ENCODE measurements at regions of chr12 and their contacts with region 1.

Region 1: GRCh38 chr12:122860346-122861090 is 25.3 kb downstream of the HIP1R start:
- DNase-seq: peak; percentile 47
- ATAC-seq: peak; percentile 76
- H3K4me3 ChIP-seq: no peak overlapping the region
- H3K27ac ChIP-seq: peak overlapping the region; percentile 86
- H3K4me1 ChIP-seq: peaks cover 44% of the 10 kb centered on the region
- H3K27me3 ChIP-seq: no peaks in the 10 kb centered on the region
- CTCF ChIP-seq: peak; percentile 94

Region 2: DNA sequence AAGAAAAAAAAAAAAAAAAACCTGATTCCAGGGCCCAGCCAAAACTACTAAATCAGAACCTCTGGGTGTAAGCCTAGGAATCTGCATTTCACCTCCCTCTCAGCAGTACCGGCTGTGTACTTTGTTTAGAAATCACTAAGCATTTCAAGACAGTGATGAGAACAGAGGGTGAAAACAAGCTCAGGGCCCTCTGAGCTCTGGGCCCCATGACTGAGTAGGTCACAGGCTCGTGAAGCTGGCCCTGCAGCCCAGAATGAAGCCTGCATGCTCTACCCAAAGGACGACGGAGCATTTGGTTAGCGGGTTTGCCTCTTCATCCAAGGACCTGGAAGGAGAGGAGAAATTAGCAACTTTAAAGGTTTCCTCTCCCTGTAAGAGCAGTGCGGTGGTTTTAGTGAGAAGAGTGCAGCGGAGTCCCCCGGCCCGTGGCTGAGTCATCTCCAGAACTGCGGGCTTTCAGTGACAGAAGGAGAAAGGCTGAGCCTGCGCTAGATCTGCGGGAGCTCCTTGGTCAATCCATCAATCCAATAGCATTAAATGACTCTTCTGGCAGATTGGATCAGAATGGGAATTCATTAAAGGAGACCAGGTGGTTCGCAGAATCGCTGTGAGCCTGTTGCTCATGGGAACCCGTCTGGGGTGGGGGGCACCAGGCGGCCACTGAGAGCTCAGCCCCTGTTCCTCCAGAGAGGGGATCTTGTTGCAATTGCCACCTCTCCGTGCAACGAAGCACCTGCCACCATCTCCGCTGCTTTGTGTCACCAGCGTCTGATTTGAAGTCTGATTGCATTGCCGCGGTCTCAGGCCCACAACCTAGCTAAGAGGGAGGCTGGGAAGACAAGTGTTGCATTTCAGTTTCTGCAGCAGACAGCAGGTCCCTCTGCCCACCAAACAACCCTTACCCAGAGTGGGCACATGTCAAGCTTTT is 693.8 kb before region 1 on chr12:
- CTCF ChIA-PET with region 1: no interaction called
- POLR2A ChIA-PET with region 1: no interaction called
- in situ Hi-C with region 1: no loop called
- intact Hi-C with region 1: no loop called
- DNase-seq: no peak
- ATAC-seq: no peak
- H3K4me3 ChIP-seq: no peak overlapping the region
- H3K27ac ChIP-seq: no peak overlapping the region
- H3K4me1 ChIP-seq: no peaks in the 10 kb centered on the region
- H3K27me3 ChIP-seq: no peaks in the 10 kb centered on the region
- CTCF ChIP-seq: no peak

Region 3: DNA sequence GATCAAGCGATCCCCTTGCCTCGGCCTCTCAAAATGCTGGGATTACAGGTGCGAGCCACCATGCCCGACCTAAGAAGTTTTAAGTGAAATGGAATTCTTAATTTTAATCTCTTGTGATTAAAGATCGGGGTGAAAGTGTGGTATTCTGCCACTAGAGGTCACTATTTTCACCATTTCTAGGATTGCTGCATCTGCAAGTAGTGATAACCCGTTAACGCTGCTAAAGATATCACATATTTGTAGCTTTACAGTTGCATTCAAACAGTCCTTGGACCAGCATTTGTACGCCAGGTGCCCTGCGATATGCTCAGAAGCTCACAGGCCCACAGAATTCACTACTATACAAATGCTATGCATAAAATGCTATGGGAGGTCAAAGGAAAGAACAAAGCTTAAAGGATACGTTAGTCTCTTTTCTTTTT is 66.8 kb before region 1 on chr12:
- CTCF ChIA-PET with region 1: interaction called, 21 read pairs
- POLR2A ChIA-PET with region 1: no interaction called
- in situ Hi-C with region 1: no loop called
- intact Hi-C with region 1: no loop called
- DNase-seq: peak; percentile 41
- ATAC-seq: peak; percentile 81
- H3K4me3 ChIP-seq: no peak overlapping the region
- H3K27ac ChIP-seq: no peak overlapping the region
- H3K4me1 ChIP-seq: no peaks in the 10 kb centered on the region
- H3K27me3 ChIP-seq: no peaks in the 10 kb centered on the region
- CTCF ChIP-seq: peak; percentile 84

Region 4: DNA sequence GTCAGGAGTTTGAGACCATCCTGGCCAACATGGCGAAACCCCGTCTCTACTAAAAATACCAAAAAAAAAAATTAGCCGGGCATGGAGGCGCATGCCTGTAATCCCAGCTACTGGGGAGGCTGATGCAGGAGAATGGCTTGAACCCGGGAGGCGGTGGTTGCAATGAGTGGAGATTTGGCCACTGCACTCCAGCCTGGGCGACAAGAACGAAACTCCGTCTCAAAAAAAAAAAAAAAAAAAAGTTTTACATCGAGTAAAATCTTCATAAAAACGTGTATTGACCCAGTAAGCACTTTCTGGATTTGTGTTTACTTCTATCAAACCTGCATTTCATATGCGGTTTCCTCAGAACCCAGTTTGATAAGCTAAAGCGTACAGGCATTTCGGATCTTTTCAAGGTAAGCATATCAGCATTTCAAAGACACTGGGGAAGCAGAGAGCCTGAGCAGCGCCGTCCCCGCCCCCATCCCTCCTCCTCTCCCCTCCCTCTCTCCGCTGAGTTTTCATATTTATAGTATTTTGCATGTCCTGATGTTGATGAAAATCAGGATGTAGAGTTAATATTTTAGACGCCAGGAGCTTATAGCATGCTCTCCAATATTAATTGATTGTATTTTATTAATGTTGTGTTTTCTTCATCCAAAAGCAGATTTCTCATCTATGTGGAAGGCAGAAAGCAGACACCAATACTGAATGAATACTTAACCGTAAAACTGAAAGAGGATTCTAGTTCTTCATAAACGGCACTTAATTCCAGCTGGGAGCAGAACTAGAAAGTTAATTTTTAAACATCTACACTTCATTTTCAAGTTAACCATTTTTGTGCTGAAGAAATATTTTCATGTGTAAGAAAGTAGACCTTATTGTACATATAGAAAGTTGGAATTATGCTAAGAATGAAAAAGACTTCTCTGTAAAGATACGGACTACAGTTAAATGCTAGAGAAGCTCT is 34.5 kb before region 1 on chr12:
- CTCF ChIA-PET with region 1: no interaction called
- POLR2A ChIA-PET with region 1: interaction called, 17 read pairs
- in situ Hi-C with region 1: no loop called
- intact Hi-C with region 1: no loop called
- DNase-seq: no peak
- ATAC-seq: peak; percentile 64
- H3K4me3 ChIP-seq: peak overlapping the region; percentile 25 to 38
- H3K27ac ChIP-seq: no peak overlapping the region
- H3K4me1 ChIP-seq: peaks cover 3% of the 10 kb centered on the region; the same call in 1 of the 2 replicates
- H3K27me3 ChIP-seq: no peaks in the 10 kb centered on the region
- CTCF ChIP-seq: no peak

Region 5: DNA sequence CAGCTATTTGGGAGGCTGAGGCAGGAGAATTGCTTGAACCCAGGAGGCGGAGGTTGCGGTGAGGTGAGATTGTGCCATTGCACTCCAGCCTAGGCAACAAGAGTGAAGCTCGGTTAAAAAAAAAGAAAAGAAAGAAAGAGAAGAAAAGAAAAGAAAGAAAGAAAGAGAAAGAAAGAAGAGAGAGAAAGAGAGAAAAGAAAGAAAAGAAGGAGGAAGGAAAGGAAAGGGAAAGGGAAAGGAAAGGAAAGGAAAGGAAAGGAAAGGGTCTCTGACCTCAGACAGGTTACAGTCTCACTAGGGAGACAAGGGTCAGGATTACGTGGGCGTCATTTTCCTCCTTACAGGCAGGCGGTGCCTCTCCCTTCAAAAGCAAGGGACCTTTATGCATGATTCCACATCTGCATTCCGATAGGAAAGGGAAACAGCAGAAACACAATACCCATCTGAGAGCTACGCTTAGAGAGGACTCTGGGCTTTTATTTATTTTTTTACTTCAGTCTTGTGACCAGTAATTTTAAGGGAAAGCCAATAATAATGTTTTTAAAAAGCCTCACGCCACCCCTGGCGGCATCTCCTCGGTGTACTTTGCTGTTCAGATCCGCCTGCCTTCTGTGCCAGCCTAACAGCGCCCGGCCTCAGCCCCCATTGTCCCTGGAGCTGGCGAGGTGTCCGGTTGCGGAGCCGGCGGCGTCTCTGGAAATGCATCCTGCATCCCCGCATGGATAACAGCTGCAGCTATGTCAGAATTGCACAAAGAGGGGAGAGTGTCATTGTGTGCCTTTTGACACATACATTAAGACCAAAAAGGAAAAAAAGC is 26.2 kb before region 1 on chr12:
- CTCF ChIA-PET with region 1: interaction called, 15 read pairs
- POLR2A ChIA-PET with region 1: no interaction called
- in situ Hi-C with region 1: no loop called
- intact Hi-C with region 1: no loop called
- DNase-seq: no peak
- ATAC-seq: peak; percentile 70
- H3K4me3 ChIP-seq: peak overlapping the region; percentile 50 to 70
- H3K27ac ChIP-seq: peak overlapping the region; percentile 40
- H3K4me1 ChIP-seq: peaks cover 12% of the 10 kb centered on the region
- H3K27me3 ChIP-seq: no peaks in the 10 kb centered on the region
- CTCF ChIP-seq: no peak; the same call in 1 of the 2 replicates

Region 6: DNA sequence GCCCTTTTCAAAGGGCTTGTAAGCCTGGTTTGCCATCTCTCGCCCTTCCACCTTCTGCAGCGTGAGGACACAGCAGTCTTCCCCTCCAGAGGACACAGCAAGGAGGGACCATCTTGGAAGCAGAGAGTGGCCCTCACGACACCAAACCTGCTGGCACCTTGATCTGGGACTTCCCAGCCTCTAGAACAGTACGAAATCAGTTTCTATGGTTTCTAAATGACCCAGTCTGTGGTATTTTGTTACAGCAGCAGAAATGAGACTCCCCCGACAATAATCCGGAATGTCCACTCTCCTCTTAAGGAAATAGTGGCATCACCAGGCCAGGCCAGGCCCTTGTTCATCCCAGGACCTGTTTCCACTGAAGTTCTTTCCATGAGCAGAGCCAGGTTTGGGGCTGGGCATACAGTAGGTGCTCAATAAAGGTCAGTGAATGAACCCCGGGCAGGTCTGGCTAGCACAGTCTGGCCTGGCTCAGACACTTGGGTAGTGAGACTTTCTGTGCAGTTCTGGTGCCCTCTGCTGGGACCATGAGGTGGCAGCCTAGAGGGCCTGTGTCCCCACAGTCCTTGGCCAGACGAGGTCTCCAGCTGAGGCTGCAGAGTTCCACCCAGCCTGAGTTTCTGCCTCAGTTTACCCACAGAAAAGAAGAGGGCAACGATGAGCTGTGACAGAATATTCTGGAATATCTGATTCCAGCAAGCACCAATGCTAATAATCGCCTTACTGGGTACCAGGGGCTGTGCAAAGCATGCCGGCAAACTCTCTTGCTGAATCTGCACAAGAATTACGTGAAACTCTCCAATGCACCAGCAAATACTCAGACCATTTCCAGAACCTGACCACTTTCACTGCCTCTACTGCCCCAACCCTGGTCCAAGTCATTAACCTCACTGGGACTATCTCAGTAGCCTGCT is 91.7 kb after region 1 on chr12:
- CTCF ChIA-PET with region 1: interaction called, 11 read pairs
- POLR2A ChIA-PET with region 1: interaction called, 7 read pairs
- in situ Hi-C with region 1: no loop called
- intact Hi-C with region 1: no loop called
- DNase-seq: no peak
- ATAC-seq: peak; percentile 97
- H3K4me3 ChIP-seq: no peak overlapping the region
- H3K27ac ChIP-seq: peak overlapping the region; percentile 82
- H3K4me1 ChIP-seq: peaks cover 27% of the 10 kb centered on the region
- H3K27me3 ChIP-seq: no peaks in the 10 kb centered on the region
- CTCF ChIP-seq: peak; percentile 95

Region 7: DNA sequence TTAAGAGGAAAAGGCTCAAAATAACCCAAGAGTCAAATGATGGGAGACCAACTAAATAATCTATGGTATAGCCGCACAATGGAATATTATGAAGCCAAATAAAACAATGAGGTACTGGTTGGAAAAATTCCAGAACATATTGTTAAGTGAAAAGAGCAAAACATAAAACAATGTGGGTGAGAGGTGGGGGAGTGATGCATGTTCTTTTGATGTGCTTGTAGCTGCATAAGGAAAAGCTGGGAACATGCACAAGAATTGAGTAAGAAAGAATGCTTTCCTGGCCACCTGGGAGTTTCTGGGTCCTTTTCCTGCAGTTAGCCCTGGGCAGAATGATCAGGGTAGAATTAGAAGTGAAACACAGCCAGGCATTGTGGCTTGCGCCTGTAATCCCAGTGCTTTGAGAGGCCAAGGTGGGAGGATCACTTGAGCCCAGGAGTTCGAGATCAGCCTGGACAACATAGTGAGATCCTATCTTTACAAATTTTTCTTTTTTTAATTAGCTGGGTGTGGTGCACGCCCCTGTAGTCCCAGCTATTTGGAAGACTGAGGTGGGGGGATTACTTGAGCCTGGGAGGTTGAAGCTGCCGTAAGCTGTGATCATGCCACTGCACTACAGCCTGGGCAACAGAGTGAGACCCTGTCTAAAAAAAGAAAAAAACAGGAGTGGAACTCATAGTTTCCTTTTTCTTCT is 97.8 kb after region 1 on chr12:
- CTCF ChIA-PET with region 1: interaction called, 11 read pairs
- POLR2A ChIA-PET with region 1: interaction called, 7 read pairs
- in situ Hi-C with region 1: no loop called
- intact Hi-C with region 1: loop called (anchors 2 kb)
- DNase-seq: no peak
- ATAC-seq: no peak
- H3K4me3 ChIP-seq: no peak overlapping the region
- H3K27ac ChIP-seq: no peak overlapping the region
- H3K4me1 ChIP-seq: peaks cover 14% of the 10 kb centered on the region
- H3K27me3 ChIP-seq: no peaks in the 10 kb centered on the region
- CTCF ChIP-seq: no peak

Measured in Panc1 (cell line).